Naive thymus-derived CD4-positive, alpha-beta T cell (primary cell): ENCODE measurements at regions of chr17 and their contacts with region 1.

Region 1: GRCh38 chr17:76240461-76241203 is at the start of gene RNF157:
- DNase-seq: peak; percentile 57 to 78 (median 69)
- ATAC-seq: peak; percentile 97
- H3K4me3 ChIP-seq: peak within 1 kb of the TSS; percentile 70
- H3K4me3 Mint-ChIP-seq: peak within 1 kb of the TSS; percentile 87 to 97 (median 94)
- H3K27ac ChIP-seq: peak within 1 kb of the TSS; percentile 78
- H3K27ac Mint-ChIP-seq: peak within 1 kb of the TSS; percentile 89 to 96 (median 92)
- H3K4me1 ChIP-seq: peaks cover 10 to 49% of the 10 kb centered on the region in 2 donors
- H3K4me1 Mint-ChIP-seq: peaks cover 27 to 80% (median 73%) of the 10 kb centered on the region in 7 donors
- H3K27me3 ChIP-seq: no peaks in the 10 kb centered on the region
- H3K27me3 Mint-ChIP-seq: peaks cover 0 to 4% (median 0%) of the 10 kb centered on the region in 5 donors
- total RNA-seq, gene RNF157: 49.2 to 96.3 (median 50.8) TPM

Region 2: GRCh38 chr17:76191896-76192295 is 48.7 kb before region 1 on chr17:
- CTCF ChIA-PET with region 1: interaction called, 3 read pairs
- POLR2A ChIA-PET with region 1: interaction called, 23 read pairs
- intact Hi-C with region 1: loop called in 1 of 2 experiments (anchors 2 kb)
- DNase-seq: peak in 7 of 9 donors; percentile 72 to 94 (median 89)
- ATAC-seq: peak; percentile 96
- H3K4me3 ChIP-seq: peak overlapping the region; percentile 42
- H3K4me3 Mint-ChIP-seq: peak overlapping the region; percentile 55 to 87 (median 73)
- H3K27ac ChIP-seq: peak overlapping the region; percentile 79
- H3K27ac Mint-ChIP-seq: peak overlapping the region; percentile 90 to 99 (median 96)
- H3K4me1 ChIP-seq: peaks cover 61 to 84% of the 10 kb centered on the region in 2 donors
- H3K4me1 Mint-ChIP-seq: peaks cover 46 to 87% (median 79%) of the 10 kb centered on the region in 7 donors
- H3K27me3 ChIP-seq: no peaks in the 10 kb centered on the region
- H3K27me3 Mint-ChIP-seq: no peaks in the 10 kb centered on the region

Region 3: DNA sequence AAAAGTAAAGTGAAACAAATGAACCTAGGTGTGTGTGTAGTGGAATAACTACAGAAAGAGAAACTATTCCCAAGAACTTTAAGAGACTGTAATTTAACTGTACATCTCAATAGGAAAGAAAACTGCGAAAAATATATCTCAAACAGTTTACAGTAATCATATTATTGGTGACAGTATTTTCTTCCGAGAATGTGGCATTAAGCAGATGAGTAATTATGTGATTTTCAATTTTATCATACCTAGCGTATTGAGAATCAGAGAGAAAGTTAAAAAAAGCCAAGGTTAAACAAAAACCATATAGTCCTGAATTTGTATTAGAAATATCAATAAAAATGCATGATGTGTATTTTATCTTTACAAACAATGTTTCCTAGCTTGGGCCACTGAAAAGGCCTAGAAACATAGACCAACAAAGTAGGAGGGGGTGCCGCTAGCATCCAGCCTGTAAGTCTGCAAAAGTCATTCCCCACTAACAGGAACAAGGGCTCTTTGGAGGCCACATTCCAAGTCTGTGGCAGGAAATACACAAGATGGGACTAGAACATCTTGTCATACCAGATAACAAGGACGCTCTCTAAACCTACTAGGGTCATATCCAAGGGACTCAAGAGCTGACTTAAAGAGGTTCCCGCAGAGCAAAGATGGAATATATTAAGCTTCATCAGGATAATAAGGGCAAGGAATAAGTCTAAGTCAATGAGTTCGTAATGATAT is 20.8 kb before region 1 on chr17:
- CTCF ChIA-PET with region 1: interaction called, 3 read pairs
- POLR2A ChIA-PET with region 1: interaction called, 14 read pairs
- intact Hi-C with region 1: loop called in 1 of 2 experiments (anchors 2 kb)
- DNase-seq: no peak
- ATAC-seq: no peak
- H3K4me3 ChIP-seq: no peak overlapping the region
- H3K4me3 Mint-ChIP-seq: no peak overlapping the region
- H3K27ac ChIP-seq: no peak overlapping the region
- H3K27ac Mint-ChIP-seq: peak overlapping the region in 3 of 9 donors; percentile 36 to 67 (median 57)
- H3K4me1 ChIP-seq: peaks cover 0 to 10% of the 10 kb centered on the region in 2 donors
- H3K4me1 Mint-ChIP-seq: peaks cover 11 to 65% (median 54%) of the 10 kb centered on the region in 7 donors
- H3K27me3 ChIP-seq: no peaks in the 10 kb centered on the region
- H3K27me3 Mint-ChIP-seq: no peaks in the 10 kb centered on the region

Region 4: GRCh38 chr17:76252040-76252954 is 11.7 kb after region 1 on chr17:
- CTCF ChIA-PET with region 1: no interaction called
- POLR2A ChIA-PET with region 1: interaction called, 375 read pairs
- intact Hi-C with region 1: loop called in 1 of 2 experiments (anchors 1 kb)
- DNase-seq: peak in 6 of 9 donors; percentile 37 to 63 (median 56)
- ATAC-seq: peak; percentile 86
- H3K4me3 ChIP-seq: peak overlapping the region; percentile 27
- H3K4me3 Mint-ChIP-seq: peak overlapping the region; percentile 69 to 86 (median 82)
- H3K27ac ChIP-seq: peak overlapping the region; percentile 68
- H3K27ac Mint-ChIP-seq: peak overlapping the region; percentile 88 to 99 (median 95)
- H3K4me1 ChIP-seq: peaks cover 33 to 47% of the 10 kb centered on the region in 2 donors
- H3K4me1 Mint-ChIP-seq: peaks cover 39 to 82% (median 65%) of the 10 kb centered on the region in 7 donors
- H3K27me3 ChIP-seq: no peaks in the 10 kb centered on the region
- H3K27me3 Mint-ChIP-seq: no peaks in the 10 kb centered on the region

Region 5: GRCh38 chr17:76271669-76272540 is 31.3 kb after region 1 on chr17:
- CTCF ChIA-PET with region 1: interaction called, 14 read pairs
- POLR2A ChIA-PET with region 1: interaction called, 375 read pairs
- intact Hi-C with region 1: loop called in 1 of 2 experiments (anchors 5 kb)
- DNase-seq: peak in 6 of 9 donors; percentile 53 to 79 (median 61)
- ATAC-seq: peak; percentile 54
- H3K4me3 ChIP-seq: peak overlapping the region; percentile 68
- H3K4me3 Mint-ChIP-seq: peak overlapping the region; percentile 75 to 93 (median 82)
- H3K27ac ChIP-seq: peak overlapping the region; percentile 92
- H3K27ac Mint-ChIP-seq: peak overlapping the region; percentile 82 to 94 (median 92)
- H3K4me1 ChIP-seq: peaks cover 65 to 70% of the 10 kb centered on the region in 2 donors
- H3K4me1 Mint-ChIP-seq: peaks cover 37 to 75% (median 71%) of the 10 kb centered on the region in 7 donors
- H3K27me3 ChIP-seq: no peaks in the 10 kb centered on the region
- H3K27me3 Mint-ChIP-seq: peaks cover 0 to 3% (median 0%) of the 10 kb centered on the region in 5 donors